Posterior vena cava (tissue), 2 donors: ENCODE measurements at regions of chr11 and their contacts with region 1.

Region 1: DNA sequence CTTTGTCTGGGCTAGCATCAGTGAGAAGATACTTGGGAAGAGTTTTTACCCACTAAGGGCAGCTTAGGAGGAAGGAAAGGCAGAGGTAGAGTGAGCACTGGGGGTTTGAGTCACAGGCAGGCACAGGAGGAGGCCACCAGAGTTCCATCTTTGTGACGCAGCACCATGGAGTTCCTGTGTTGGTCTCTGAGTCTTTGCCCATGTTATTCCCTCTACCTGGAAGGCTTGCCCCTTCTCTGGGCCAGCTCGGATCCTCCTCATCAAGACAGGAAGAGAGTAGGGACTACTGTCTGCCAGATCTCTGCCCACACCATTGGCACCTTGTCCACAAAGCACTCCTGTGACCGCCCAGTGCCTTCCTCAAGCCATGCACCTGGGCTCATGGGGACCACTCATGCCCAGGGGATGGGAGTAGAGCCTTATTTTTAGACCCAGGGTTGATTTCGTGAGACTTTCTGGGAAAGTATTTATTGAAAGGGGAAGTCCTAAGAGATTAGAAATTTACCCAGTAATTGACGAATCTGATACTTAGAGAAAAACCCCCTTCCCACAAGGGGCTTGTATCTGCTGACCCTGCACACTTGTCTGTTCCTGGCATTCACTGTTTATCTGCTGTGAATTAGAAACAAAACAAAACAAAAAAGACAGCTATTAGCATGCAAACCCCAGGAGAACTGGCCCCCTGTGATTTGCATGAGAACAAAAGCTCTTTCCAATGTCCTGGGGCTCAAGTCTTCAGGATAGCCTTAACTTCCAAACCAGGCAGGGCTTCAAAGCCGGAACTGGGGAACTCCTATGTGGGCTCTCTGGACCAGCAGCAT is 35.9 kb upstream of the MYEOV start:
- DNase-seq: no peak

Region 2: GRCh38 chr11:69137148-69137844 is 120.8 kb before region 1 on chr11:
- intact Hi-C with region 1: loop called in 1 of 2 experiments (anchors 1 kb)
- DNase-seq: peak; percentile 38

Region 3: DNA sequence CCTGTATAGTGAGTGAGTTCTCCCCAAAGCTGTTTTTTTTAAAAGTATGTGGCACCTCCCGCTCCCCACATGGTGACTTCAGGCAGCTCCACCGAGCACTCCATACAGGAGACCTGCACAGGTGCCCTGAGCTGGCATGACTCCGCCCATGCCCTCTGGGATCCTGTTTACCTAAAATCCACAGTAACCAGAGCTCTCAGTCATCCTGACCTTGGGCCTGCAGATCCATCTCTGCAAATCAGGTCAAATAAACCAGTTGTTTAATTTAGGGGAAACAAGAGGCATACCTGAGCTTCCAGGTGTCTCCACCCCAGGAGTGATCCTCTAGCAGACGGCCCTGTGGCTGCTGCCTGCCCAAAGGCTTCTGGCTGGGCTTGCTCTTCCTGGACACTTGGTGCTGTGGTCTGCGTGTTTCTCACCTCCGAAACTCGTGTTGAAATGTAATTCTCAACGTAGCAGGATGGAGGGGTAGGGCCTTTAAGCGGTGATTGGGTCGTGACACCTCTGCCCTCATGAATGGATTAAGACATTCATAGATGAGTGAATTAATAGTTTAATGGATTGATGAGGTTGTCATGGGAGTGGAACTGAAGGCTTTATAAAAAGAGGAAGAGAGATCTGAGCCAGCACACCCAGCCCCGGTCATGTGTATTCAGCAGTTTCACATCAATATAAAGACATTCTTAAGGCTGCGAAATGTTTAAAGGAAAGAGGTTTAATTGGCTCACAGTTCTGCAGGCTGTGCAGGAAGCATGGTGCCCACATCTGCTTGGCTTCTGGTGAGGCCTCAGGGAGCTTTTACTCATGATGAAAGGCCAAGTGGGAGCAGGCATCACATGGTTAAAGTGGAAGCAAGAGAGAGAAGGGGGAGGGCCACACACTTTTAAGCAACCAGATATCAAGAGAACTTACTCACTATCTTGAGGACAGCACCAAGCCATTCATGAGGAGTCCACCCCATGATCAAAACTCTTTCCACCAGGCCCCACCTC is 257.5 kb after region 1 on chr11:
- intact Hi-C with region 1: loop called in 1 of 2 experiments (anchors 1 kb)
- DNase-seq: peak; percentile 49

Region 4: GRCh38 chr11:69662017-69662698 is 404.1 kb after region 1 on chr11:
- intact Hi-C with region 1: no loop called
- DNase-seq: peak; percentile 87